Activated CD4-positive, alpha-beta memory T cell treated with anti-CD3 and anti-CD28 coated beads for 36 hours (primary cell): ENCODE measurements at regions of chr7 and their contacts with region 1.

Region 1: DNA sequence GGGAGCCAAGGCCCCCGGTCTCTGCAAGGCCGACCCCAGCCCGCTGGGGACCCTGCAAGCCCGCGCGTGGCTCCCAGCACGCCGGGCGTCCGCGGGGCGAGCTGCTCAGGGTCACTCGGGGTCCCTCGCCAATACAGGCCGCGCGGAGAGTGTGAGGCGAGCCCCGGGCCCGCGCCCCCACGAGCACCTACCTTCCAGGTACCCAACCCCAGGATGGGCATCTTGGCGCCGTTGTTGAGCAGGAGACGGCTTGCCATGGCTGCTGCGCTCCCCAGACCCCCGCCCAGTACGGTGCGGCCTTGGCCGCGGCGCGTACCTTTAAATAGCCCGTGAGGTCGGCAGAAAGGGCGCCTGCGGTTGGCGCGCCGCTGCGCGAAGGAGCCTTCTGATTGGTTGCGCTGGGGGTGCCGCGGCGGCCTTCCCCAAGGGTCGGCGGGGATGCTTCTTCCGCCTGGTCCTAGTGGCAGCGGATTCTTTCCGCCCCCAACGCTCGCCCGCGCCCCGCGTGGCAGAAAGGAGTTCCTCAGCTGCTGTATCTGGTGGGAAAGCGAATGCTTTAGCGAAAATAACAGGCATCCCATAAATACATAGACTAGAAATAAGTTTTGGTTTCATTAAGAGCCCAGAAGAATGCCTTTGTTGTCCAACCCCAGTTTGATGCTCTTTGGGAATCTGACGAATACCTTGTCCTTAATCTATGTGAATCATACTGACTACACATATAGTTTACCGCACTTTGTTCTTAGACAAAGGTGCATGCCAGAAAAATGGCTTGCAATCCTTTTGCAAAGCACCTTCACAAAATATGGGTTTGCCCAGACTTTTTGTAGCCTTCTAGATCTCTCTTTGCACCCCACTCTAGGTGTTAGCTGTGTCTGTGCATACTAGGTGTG is at the start of gene AKR1B1:
- DNase-seq: peak; percentile 93
- H3K4me3 Mint-ChIP-seq: peak within 1 kb of the TSS; percentile 82
- H3K27ac Mint-ChIP-seq: peak within 1 kb of the TSS; percentile 67
- H3K4me1 Mint-ChIP-seq: peaks cover 41% of the 10 kb centered on the region
- H3K27me3 Mint-ChIP-seq: no peaks in the 10 kb centered on the region
- total RNA-seq, gene AKR1B1: 97.8 to 102 TPM

Region 2: DNA sequence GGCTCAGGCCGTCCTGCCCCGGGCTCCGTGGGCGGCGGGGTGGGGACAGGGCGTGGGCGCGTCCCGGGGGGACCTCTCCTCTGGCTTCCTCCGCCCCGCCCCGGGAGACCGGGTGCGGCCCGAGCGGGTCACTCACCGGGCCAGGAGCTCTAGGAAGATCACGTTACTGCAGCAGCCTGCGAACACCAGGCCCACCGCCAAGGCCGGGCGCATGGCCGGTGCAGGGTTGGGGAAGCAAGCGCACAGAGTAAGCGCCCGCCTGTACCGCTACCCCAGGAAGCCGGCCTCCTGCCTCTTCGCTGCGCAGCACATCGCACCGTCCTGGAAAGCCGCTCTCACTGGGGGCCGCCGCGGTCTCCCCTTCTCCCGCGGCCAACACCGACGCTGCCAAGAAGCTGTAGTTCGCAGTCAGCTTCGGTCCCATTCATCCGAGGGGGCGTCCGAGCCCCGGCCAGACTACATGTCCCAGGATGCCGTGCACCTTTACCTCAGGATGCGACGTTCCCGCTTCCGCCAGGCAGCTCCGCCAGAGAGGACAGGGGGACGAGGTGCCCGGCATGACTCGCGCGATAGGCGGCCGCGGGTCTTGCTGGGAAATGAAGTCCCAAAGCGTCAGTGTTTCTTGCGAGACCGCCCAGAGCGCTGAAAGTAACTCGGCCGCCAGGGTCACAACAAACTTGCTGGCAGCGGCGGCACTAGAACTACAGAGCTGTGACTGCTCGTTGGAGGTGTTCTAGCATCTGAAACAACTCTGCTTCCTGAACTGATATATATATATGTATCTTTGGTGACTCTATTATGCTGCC is 142.3 kb before region 1 on chr7 and contains the start of gene SLC35B4:
- CTCF ChIA-PET with region 1: interaction called, 4 read pairs
- POLR2A ChIA-PET with region 1: no interaction called
- intact Hi-C with region 1: loop called (anchors 1 kb)
- DNase-seq: peak; percentile 97
- H3K4me3 Mint-ChIP-seq: peak within 1 kb of the TSS; percentile 90
- H3K27ac Mint-ChIP-seq: peak within 1 kb of the TSS; percentile 72
- H3K4me1 Mint-ChIP-seq: peaks cover 19% of the 10 kb centered on the region
- H3K27me3 Mint-ChIP-seq: no peaks in the 10 kb centered on the region
- total RNA-seq, gene SLC35B4: 10.9 to 14.5 TPM

Region 3: GRCh38 chr7:134514663-134515062 is 55.6 kb after region 1 on chr7:
- CTCF ChIA-PET with region 1: interaction called, 20 read pairs
- POLR2A ChIA-PET with region 1: no interaction called
- intact Hi-C with region 1: loop called (anchors 1 kb)
- DNase-seq: no peak
- H3K4me3 Mint-ChIP-seq: no peak overlapping the region
- H3K27ac Mint-ChIP-seq: no peak overlapping the region
- H3K4me1 Mint-ChIP-seq: peaks cover 6% of the 10 kb centered on the region
- H3K27me3 Mint-ChIP-seq: peaks cover 8% of the 10 kb centered on the region

Region 4: GRCh38 chr7:134646425-134647305 is 187.6 kb after region 1 on chr7 and contains the start of gene BPGM:
- CTCF ChIA-PET with region 1: interaction called, 4 read pairs
- POLR2A ChIA-PET with region 1: no interaction called
- intact Hi-C with region 1: loop called (anchors 1 kb)
- DNase-seq: peak; percentile 98
- H3K4me3 Mint-ChIP-seq: no peak within 1 kb of the TSS
- H3K27ac Mint-ChIP-seq: no peak within 1 kb of the TSS
- H3K4me1 Mint-ChIP-seq: peaks cover 32% of the 10 kb centered on the region
- H3K27me3 Mint-ChIP-seq: no peaks in the 10 kb centered on the region
- total RNA-seq, gene BPGM: 23.7 to 24.9 TPM

Region 5: GRCh38 chr7:134986363-134987251 is 527.6 kb after region 1 on chr7 and contains the start of gene AGBL3:
- CTCF ChIA-PET with region 1: no interaction called
- POLR2A ChIA-PET with region 1: no interaction called
- intact Hi-C with region 1: loop called (anchors 5 kb)
- DNase-seq: peak; percentile 95
- H3K4me3 Mint-ChIP-seq: peak within 1 kb of the TSS; percentile 95
- H3K27ac Mint-ChIP-seq: peak within 1 kb of the TSS; percentile 95
- H3K4me1 Mint-ChIP-seq: peaks cover 35% of the 10 kb centered on the region
- H3K27me3 Mint-ChIP-seq: no peaks in the 10 kb centered on the region
- total RNA-seq, gene AGBL3: 3.3 to 3.4 TPM

Region 6: DNA sequence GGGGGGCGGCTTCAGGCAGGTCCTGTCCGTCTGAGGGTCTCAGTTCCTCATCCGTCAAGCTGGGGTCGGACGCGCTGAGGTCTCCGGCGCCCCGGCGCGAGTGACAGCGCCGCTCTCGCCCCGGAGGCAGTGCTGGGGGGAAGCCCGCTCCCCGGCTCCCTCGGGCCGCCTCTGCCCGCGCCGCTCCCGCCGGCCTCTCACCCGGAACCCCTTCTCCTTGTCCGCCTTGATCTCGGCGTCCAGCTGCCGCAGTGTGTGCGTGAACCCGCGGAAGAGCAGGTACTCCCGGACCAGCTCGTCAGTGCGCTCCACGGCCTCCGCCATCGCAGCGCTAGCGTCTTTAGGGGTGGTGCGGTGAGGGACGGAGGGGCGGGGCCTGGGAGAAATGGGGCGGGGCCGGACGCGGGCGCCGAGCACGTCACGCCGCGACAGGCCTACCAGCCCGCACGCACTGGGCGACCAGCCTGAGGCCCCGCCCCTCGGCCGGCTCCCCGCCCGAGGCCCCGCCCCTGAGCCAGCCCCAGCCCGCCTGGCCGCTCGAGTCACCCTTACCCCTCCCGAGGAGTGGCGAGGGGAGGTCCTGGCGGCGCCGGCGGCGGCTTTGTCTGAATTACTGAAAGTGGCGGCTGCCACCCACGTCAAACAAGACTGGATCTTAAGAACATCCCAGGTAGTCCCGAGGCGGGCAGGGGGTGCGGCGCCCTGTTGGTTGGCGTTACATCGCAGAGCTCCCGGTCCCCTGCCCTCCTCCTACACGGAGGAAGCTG is 752.3 kb after region 1 on chr7 and contains the start of gene WDR91:
- CTCF ChIA-PET with region 1: no interaction called
- POLR2A ChIA-PET with region 1: no interaction called
- intact Hi-C with region 1: loop called (anchors 1 kb)
- DNase-seq: peak; percentile 98
- H3K4me3 Mint-ChIP-seq: peak within 1 kb of the TSS; percentile 93
- H3K27ac Mint-ChIP-seq: peak within 1 kb of the TSS; percentile 83
- H3K4me1 Mint-ChIP-seq: peaks cover 23% of the 10 kb centered on the region
- H3K27me3 Mint-ChIP-seq: no peaks in the 10 kb centered on the region
- total RNA-seq, gene WDR91: 10.3 to 11.0 TPM